Posterior cingulate gyrus (tissue), 11 donors: ENCODE measurements at regions of chr4 and their contacts with region 1.

Region 1: DNA sequence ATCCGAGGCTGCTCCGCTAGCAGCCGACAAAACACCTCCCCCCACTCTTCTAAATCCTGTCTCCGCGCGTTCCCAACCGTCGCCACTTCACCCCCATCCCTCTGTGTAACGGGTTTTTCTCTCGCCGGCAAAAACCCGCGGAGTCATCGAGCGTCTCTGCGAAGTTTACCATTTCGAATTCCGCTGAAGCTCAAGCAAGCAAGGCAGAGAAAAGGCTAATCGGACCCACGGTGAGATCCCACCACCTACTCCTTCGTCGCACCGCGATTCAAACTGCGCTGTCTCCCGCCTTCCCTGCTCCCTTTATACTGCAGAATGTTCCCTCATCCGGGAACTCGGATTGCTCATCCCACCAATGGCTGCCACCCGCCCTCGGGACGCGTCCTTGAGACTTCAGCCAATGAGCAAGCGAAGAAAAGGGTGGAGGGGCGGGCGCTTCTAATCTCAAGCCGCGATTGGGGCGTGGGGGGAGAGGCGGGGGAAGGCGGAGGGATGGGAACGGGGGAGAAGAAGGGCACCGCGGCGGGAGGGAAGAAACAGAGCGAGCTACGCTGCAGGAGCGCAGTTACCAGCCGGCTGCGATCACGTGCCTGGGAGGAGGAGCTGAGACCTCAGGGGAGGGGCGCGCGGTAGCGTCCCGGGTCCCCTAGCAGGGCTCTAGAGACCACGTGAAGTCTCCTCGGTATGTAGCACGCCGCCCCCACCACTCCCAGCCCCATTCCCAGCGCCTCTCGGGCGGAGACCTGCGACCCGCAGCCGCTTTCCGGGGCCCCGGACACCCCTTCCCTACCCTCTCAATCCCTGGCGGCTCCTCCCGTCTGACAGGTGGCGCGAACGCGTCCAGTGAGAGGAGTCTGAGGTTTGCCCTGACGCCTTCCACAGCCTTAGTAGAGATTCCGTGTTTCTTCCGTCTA is at the start of gene H2AZ1:
- DNase-seq: peak; percentile 97 to 100 (median 98)

Region 2: DNA sequence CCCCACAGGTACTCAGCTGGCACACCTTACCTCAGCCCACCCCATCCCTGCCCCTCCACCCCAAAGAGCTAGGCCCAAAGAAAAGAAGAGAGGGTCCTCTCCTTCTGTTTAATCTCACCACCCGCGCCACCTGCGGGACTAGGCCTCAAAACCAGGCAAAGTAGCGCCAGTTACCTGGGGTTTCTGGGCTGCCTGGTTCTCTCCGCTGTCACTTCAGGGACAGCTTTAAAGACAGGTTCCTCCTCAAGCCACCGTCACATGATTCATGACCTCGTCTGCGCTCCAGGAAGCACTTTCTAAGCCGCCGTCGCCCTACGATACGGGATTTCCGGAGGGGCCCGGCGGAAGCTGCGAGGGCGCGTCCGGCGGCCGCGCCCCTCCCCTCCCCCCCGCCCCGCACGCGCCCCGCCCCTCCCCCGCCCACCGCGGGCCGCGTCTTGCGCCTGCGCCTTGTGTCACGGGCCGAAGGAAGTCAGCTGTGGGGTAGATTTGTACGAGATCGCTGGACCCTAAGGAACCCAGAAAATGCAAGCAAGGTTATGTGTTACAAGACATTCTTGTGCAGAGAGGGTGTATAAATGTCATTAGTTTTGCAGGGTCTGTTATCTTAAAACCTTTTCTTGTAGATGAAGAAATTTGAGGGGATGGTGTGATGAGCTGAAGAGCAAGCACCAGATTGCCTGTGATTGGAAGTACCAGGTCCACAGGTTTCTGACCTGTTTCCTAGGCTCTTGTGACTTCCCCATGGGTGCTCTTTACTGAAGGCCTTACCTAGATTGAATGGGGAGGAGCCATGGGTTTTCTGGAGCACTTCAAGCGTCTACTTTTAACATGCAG is 55.9 kb before region 1 on chr4 and contains the start of gene LAMTOR3:
- intact Hi-C with region 1: loop called (anchors 2 kb)
- DNase-seq: peak; percentile 85 to 98 (median 90)